Activated CD4-positive, alpha-beta memory T cell treated with anti-CD3 and anti-CD28 coated beads for 36 hours (primary cell): ENCODE measurements at regions of chr6 and their contacts with region 1.

Region 1: DNA sequence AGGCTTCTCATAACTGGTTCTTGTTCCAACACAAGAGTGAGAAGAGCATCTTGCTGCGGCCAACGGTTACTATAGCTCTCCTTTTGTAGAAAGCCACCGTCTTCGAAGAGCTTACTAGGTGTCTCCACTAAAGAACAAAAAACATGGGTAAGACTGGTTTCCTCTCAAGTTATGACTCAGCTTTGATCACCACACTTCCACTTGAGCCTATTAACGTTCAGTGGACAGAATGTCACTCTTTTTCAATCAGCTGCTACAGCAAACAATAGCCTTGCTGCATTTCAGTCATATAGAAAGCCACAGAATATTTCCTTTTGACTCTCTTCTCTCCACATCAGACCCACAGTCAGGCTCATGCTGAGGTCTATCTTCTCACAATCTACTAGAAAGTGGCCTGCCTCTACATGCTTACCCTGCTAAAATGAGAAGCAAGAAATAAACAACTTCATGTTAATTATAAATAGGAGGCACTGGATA is 243.5 kb upstream of the PREP start:
- DNase-seq: peak; percentile 68
- H3K4me3 Mint-ChIP-seq: no peak overlapping the region
- H3K27ac Mint-ChIP-seq: peak overlapping the region; percentile 70
- H3K4me1 Mint-ChIP-seq: peaks cover 65% of the 10 kb centered on the region
- H3K27me3 Mint-ChIP-seq: peaks cover 48% of the 10 kb centered on the region

Region 2: GRCh38 chr6:104789770-104790190 is 856.6 kb before region 1 on chr6:
- CTCF ChIA-PET with region 1: no interaction called
- POLR2A ChIA-PET with region 1: no interaction called
- intact Hi-C with region 1: loop called (anchors 5 kb)
- DNase-seq: peak; percentile 16
- H3K4me3 Mint-ChIP-seq: peak overlapping the region; percentile 50
- H3K27ac Mint-ChIP-seq: peak overlapping the region; percentile 85
- H3K4me1 Mint-ChIP-seq: peaks cover 25% of the 10 kb centered on the region
- H3K27me3 Mint-ChIP-seq: no peaks in the 10 kb centered on the region

Region 3: GRCh38 chr6:105292689-105293339 is 353.6 kb before region 1 on chr6:
- CTCF ChIA-PET with region 1: no interaction called
- POLR2A ChIA-PET with region 1: no interaction called
- intact Hi-C with region 1: no loop called
- DNase-seq: no peak
- H3K4me3 Mint-ChIP-seq: no peak overlapping the region
- H3K27ac Mint-ChIP-seq: no peak overlapping the region
- H3K4me1 Mint-ChIP-seq: no peaks in the 10 kb centered on the region
- H3K27me3 Mint-ChIP-seq: no peaks in the 10 kb centered on the region

Region 4: GRCh38 chr6:105492706-105493673 is 153.4 kb before region 1 on chr6:
- CTCF ChIA-PET with region 1: no interaction called
- POLR2A ChIA-PET with region 1: interaction called, 4 read pairs
- intact Hi-C with region 1: loop called (anchors 1 kb)
- DNase-seq: no peak
- H3K4me3 Mint-ChIP-seq: no peak overlapping the region
- H3K27ac Mint-ChIP-seq: peak overlapping the region; percentile 44
- H3K4me1 Mint-ChIP-seq: peaks cover 15% of the 10 kb centered on the region
- H3K27me3 Mint-ChIP-seq: no peaks in the 10 kb centered on the region

Region 5: GRCh38 chr6:105620878-105621277 is 25.6 kb before region 1 on chr6:
- CTCF ChIA-PET with region 1: interaction called, 3 read pairs
- POLR2A ChIA-PET with region 1: interaction called, 5 read pairs
- intact Hi-C with region 1: loop called (anchors 1 kb)
- DNase-seq: peak; percentile 47
- H3K4me3 Mint-ChIP-seq: no peak overlapping the region
- H3K27ac Mint-ChIP-seq: peak overlapping the region; percentile 81
- H3K4me1 Mint-ChIP-seq: peaks cover 19% of the 10 kb centered on the region
- H3K27me3 Mint-ChIP-seq: peaks cover 5% of the 10 kb centered on the region

Region 6: GRCh38 chr6:105769987-105770386 is 123.6 kb after region 1 on chr6:
- CTCF ChIA-PET with region 1: no interaction called
- POLR2A ChIA-PET with region 1: no interaction called
- intact Hi-C with region 1: no loop called
- DNase-seq: no peak
- H3K4me3 Mint-ChIP-seq: no peak overlapping the region
- H3K27ac Mint-ChIP-seq: no peak overlapping the region
- H3K4me1 Mint-ChIP-seq: no peaks in the 10 kb centered on the region
- H3K27me3 Mint-ChIP-seq: peaks cover 2% of the 10 kb centered on the region

Region 7: GRCh38 chr6:105810105-105810921 is 163.9 kb after region 1 on chr6:
- CTCF ChIA-PET with region 1: no interaction called
- POLR2A ChIA-PET with region 1: no interaction called
- intact Hi-C with region 1: loop called (anchors 1 kb)
- DNase-seq: peak; percentile 82
- H3K4me3 Mint-ChIP-seq: no peak overlapping the region
- H3K27ac Mint-ChIP-seq: peak overlapping the region; percentile 53
- H3K4me1 Mint-ChIP-seq: peaks cover 42% of the 10 kb centered on the region
- H3K27me3 Mint-ChIP-seq: peaks cover 10% of the 10 kb centered on the region

Region 8: GRCh38 chr6:105981002-105981887 is 334.8 kb after region 1 on chr6:
- CTCF ChIA-PET with region 1: no interaction called
- POLR2A ChIA-PET with region 1: no interaction called
- intact Hi-C with region 1: loop called (anchors 2 kb)
- DNase-seq: peak; percentile 60
- H3K4me3 Mint-ChIP-seq: peak overlapping the region; percentile 78
- H3K27ac Mint-ChIP-seq: peak overlapping the region; percentile 93
- H3K4me1 Mint-ChIP-seq: peaks cover 53% of the 10 kb centered on the region
- H3K27me3 Mint-ChIP-seq: peaks cover 32% of the 10 kb centered on the region

Region 9: DNA sequence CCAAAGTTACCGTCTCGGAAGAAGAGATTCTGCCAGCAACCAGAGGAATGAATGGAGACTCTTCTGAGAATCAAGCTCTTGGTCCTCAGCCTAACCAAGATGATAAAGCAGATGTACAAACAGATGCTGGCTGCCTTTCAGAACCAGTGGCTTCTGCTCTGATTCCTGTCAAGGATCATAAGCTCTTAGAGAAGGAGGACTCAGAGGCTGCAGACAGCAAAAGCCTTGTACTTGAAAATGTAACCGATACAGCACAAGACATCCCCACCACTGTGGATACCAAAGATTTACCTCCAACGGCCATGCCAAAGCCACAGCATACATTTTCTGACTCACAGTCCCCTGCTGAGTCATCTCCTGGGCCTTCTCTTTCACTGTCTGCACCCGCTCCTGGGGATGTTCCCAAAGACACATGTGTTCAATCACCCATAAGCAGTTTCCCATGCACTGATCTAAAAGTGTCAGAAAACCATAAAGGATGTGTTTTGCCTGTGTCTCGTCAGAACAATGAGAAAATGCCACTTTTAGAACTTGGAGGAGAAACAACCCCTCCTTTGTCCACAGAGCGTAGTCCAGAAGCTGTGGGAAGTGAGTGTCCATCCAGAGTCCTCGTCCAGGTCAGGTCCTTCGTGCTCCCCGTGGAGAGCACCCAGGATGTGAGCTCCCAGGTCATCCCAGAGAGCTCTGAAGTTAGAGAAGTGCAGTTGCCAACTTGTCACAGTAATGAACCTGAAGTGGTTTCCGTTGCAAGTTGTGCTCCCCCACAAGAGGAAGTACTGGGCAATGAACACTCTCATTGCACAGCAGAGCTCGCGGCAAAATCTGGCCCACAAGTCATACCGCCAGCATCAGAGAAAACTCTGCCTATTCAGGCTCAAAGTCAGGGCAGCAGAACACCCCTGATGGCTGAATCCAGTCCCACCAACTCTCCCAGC is 873.3 kb after region 1 on chr6:
- CTCF ChIA-PET with region 1: no interaction called
- POLR2A ChIA-PET with region 1: interaction called, 4 read pairs
- intact Hi-C with region 1: loop called (anchors 5 kb)
- DNase-seq: peak; percentile 92
- H3K4me3 Mint-ChIP-seq: peak overlapping the region; percentile 76
- H3K27ac Mint-ChIP-seq: peak overlapping the region; percentile 99
- H3K4me1 Mint-ChIP-seq: peaks cover 67% of the 10 kb centered on the region
- H3K27me3 Mint-ChIP-seq: no peaks in the 10 kb centered on the region